ENCODE measurements at regions of chr1 and their contacts with region 1.

Region 1: GRCh38 chr1:19485362-19486187 is at the start of gene CAPZB:
- DNase-seq: peak; percentile 93
- H3K4me3 ChIP-seq: peak within 1 kb of the TSS; percentile 98
- H3K27ac ChIP-seq: peak within 1 kb of the TSS; percentile 66
- H3K4me1 ChIP-seq: peaks cover 39% of the 10 kb centered on the region
- CTCF ChIP-seq: no peak
- total RNA-seq, gene CAPZB: 56.1 and 61.3 TPM in 2 replicates

Region 2: GRCh38 chr1:19390901-19391595 is 94.5 kb before region 1 on chr1:
- CTCF ChIA-PET with region 1: no interaction called
- POLR2A ChIA-PET with region 1: no interaction called
- intact Hi-C with region 1: loop called (anchors 5 kb)
- DNase-seq: peak; percentile 74
- H3K4me3 ChIP-seq: peak overlapping the region; percentile 41
- H3K27ac ChIP-seq: peak overlapping the region; percentile 77
- H3K4me1 ChIP-seq: peaks cover 44% of the 10 kb centered on the region
- CTCF ChIP-seq: peak; percentile 99

Region 3: GRCh38 chr1:19462781-19463503 is 22.6 kb before region 1 on chr1:
- CTCF ChIA-PET with region 1: interaction called, 6 read pairs
- POLR2A ChIA-PET with region 1: no interaction called
- intact Hi-C with region 1: loop called (anchors 1 kb)
- DNase-seq: peak; percentile 66
- H3K4me3 ChIP-seq: no peak overlapping the region
- H3K27ac ChIP-seq: no peak overlapping the region
- H3K4me1 ChIP-seq: peaks cover 13% of the 10 kb centered on the region
- CTCF ChIP-seq: no peak

Region 4: GRCh38 chr1:19582302-19582701 is 96.7 kb after region 1 on chr1:
- CTCF ChIA-PET with region 1: no interaction called
- POLR2A ChIA-PET with region 1: no interaction called
- intact Hi-C with region 1: loop called (anchors 2 kb)
- DNase-seq: peak; percentile 74
- H3K4me3 ChIP-seq: no peak overlapping the region
- H3K27ac ChIP-seq: no peak overlapping the region
- H3K4me1 ChIP-seq: no peaks in the 10 kb centered on the region
- CTCF ChIP-seq: peak; percentile 95

Measured in OCI-LY7 (cell line).